Body of pancreas (tissue), 4 donors: ENCODE measurements at regions of chr1 and their contacts with region 1.

Region 1: GRCh38 chr1:116492358-116492811 is 78.4 kb downstream of the CD58 start:
- DNase-seq: no peak
- ATAC-seq: no peak
- H3K4me3 ChIP-seq: no peak overlapping the region
- H3K27ac ChIP-seq: peak overlapping the region; percentile 34 to 83 (median 78)
- H3K4me1 ChIP-seq: peaks cover 71% of the 10 kb centered on the region
- H3K27me3 ChIP-seq: no peaks in the 10 kb centered on the region
- CTCF ChIP-seq: no peak
- POLR2A ChIP-seq: no peak

Region 2: GRCh38 chr1:116139592-116140134 is 352.7 kb before region 1 on chr1:
- intact Hi-C with region 1: loop called (anchors 5 kb)
- DNase-seq: no peak
- ATAC-seq: no peak
- H3K4me3 ChIP-seq: no peak overlapping the region
- H3K27ac ChIP-seq: no peak overlapping the region
- H3K4me1 ChIP-seq: no peaks in the 10 kb centered on the region
- H3K27me3 ChIP-seq: no peaks in the 10 kb centered on the region
- CTCF ChIP-seq: no peak
- POLR2A ChIP-seq: no peak

Region 3: GRCh38 chr1:116243333-116244054 is 248.9 kb before region 1 on chr1:
- intact Hi-C with region 1: no loop called
- DNase-seq: peak in 1 of 4 donors; percentile 17
- ATAC-seq: peak; percentile 34
- H3K4me3 ChIP-seq: no peak overlapping the region
- H3K27ac ChIP-seq: peak overlapping the region; percentile 5 to 61 (median 23)
- H3K4me1 ChIP-seq: peaks cover 19% of the 10 kb centered on the region
- H3K27me3 ChIP-seq: no peaks in the 10 kb centered on the region
- CTCF ChIP-seq: no peak
- POLR2A ChIP-seq: no peak

Region 4: DNA sequence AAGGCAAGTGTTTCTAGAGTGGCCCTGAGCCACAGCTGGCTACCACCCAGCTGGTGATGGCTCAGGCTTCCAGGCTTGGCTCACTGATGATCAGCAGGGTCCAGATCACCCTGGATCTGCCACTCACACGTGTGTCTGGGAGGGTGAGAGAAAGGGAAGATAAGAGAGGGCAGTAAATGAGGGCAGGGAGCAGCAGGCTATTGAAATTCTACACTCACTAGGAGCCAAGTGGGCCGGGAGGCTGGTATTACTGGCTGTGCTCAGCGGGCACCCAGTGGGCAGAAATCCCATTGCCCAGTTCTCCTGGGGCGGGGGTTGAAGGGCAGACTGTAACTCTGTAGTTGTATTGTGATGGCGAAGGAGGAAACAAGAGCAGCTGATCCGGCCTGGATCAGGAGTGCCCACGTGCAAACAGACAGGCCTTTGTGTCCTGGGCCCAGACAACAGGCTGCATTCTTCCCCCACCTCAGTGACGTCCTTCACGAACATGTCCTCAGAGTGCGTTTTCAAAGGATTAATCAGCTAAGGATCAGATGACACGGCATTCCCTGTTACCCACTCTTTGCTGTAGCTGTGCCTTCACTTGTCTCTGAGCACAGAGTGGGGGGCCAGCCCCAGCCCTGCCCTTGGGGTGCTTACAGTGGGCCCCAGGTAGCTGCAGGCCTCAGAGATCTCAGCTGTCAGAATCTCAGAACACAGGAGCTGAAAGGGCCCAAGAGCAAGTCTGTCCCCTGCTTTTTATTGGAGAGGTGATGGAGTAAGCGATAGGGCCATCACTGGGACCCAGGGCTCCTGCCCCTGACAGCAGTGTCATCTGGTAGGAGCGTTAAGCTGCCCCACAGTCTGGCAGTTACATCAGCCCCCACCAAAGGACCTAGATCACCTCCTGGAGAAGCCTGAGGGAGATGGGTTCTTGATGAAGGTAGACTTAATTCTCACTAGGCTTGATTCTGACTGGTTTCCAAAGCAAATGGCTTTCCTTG is 58.8 kb before region 1 on chr1:
- intact Hi-C with region 1: no loop called
- DNase-seq: peak; percentile 65 to 84 (median 74)
- ATAC-seq: peak; percentile 91
- H3K4me3 ChIP-seq: no peak overlapping the region
- H3K27ac ChIP-seq: peak overlapping the region; percentile 66 to 88 (median 86)
- H3K4me1 ChIP-seq: peaks cover 5% of the 10 kb centered on the region
- H3K27me3 ChIP-seq: no peaks in the 10 kb centered on the region
- CTCF ChIP-seq: peak in 2 of 7 experiments; percentile 9 to 18
- POLR2A ChIP-seq: peak in 2 of 3 donors; percentile 26 to 28

Region 5: GRCh38 chr1:116448813-116449281 is 43.5 kb before region 1 on chr1:
- intact Hi-C with region 1: no loop called
- DNase-seq: no peak
- ATAC-seq: no peak
- H3K4me3 ChIP-seq: no peak overlapping the region
- H3K27ac ChIP-seq: no peak overlapping the region
- H3K4me1 ChIP-seq: no peaks in the 10 kb centered on the region
- H3K27me3 ChIP-seq: no peaks in the 10 kb centered on the region
- CTCF ChIP-seq: no peak
- POLR2A ChIP-seq: no peak